ENCODE measurements at regions of chr9 and their contacts with region 1.

Region 1: GRCh38 chr9:2809691-2810433 is 34.0 kb downstream of the PUM3 start:
- DNase-seq: no peak
- ATAC-seq: no peak
- H3K4me3 Mint-ChIP-seq: no peak overlapping the region
- H3K27ac Mint-ChIP-seq: no peak overlapping the region
- H3K4me1 Mint-ChIP-seq: no peaks in the 10 kb centered on the region
- H3K27me3 Mint-ChIP-seq: no peaks in the 10 kb centered on the region

Region 2: GRCh38 chr9:2826291-2826690 is 16.4 kb after region 1 on chr9:
- CTCF ChIA-PET with region 1: no interaction called
- POLR2A ChIA-PET with region 1: interaction called, 5 read pairs
- intact Hi-C with region 1: loop called in 1 of 2 experiments (anchors 2 kb)
- DNase-seq: no peak
- ATAC-seq: no peak
- H3K4me3 Mint-ChIP-seq: no peak overlapping the region
- H3K27ac Mint-ChIP-seq: no peak overlapping the region
- H3K4me1 Mint-ChIP-seq: no peaks in the 10 kb centered on the region
- H3K27me3 Mint-ChIP-seq: no peaks in the 10 kb centered on the region

Measured in activated CD4-positive, alpha-beta T cell treated with anti-CD3 and anti-CD28 coated beads for 36 hours (primary cell).